ENCODE measurements at regions of chr1 and their contacts with region 1.

Region 1: DNA sequence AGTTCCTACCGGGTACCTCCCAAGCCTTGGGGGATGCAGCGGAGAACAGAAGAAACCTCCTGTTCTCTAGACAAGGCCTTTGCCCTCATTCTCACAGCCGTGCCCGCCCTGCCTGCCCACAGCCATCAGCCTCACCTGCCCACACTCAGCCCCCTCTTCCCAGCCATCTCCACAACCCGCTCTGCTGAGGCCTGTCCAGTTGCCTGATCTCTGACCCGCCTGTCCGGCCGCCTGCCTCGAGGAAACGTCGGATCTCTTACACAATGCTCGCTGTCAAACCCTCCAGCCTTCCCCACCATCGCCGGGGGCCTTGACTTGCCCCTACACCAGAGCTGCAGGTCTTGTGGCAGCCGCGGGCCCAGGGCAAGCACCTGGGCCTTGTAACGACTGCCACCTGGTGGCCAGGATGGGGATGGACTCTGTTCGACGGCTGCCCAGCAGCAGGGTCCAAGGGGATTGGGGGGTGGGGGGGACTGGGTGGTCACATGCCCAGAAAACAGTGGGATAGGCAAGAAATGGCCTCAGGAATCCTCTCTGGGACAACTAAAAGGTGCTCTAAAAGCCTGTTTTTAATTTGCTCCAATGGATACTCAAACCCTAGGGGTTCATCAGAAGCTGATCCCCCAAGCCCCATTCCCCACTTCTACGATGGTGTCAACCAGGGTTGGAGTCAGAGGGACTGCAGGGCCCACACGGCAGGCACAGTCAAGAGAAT is 31.0 kb downstream of the SLC45A1 start:
- DNase-seq: peak; percentile 67 to 75 (median 75)
- ATAC-seq: peak; percentile 73
- H3K4me3 ChIP-seq: no peak overlapping the region
- H3K27ac ChIP-seq: no peak overlapping the region
- H3K4me1 ChIP-seq: peaks cover 6% of the 10 kb centered on the region
- H3K27me3 ChIP-seq: no peaks in the 10 kb centered on the region
- CTCF ChIP-seq: peak; percentile 72 to 90 (median 76)
- POLR2A ChIP-seq: no peak

Region 2: DNA sequence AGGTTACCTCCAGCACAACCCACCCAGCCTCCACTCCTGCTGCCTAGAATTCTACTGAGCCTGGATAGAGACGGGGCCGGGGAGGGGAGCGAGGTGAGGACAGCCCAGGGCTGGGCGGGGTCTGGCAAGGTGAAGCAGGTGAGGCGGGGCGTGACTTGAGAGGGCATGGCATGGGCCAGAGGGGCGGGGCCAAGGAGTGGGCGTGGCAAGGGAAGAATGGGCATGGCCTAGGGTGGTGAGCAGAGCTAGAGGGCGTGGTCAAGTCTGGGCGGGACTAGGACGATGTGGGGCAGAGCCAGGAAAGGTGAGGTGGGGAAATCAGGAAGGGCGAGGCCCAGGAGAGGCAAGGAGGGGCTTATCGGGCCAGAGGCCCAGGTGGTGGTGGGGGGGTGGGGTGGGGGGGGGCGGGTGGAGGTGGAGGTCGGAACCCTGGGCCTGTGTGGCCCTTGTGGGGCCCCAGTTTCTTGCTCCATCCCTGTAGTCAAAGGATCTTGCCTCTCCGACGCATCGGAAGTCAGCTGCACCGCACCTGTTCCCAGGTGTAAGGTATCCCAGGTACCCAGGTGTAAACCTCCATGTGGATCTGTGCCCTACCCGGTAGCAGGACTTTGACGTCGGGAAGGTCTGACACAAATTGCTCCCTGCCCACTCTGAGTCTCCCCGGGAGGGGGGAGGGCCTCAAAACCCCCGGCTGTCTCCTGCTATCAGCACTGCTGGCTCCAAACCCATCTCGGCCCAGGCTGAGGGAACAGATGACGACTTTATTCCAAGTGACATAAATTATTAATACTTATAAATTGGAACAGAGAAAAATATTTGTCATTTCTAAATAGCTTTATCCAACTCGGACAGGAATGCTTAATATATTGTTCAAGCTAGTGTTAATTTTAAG is 463.2 kb before region 1 on chr1:
- intact Hi-C with region 1: no loop called
- DNase-seq: peak; percentile 87 to 95 (median 90)
- ATAC-seq: peak; percentile 95
- H3K4me3 ChIP-seq: no peak overlapping the region
- H3K27ac ChIP-seq: peak overlapping the region in 2 of 4 donors; percentile 12 to 22
- H3K4me1 ChIP-seq: peaks cover 9% of the 10 kb centered on the region
- H3K27me3 ChIP-seq: no peaks in the 10 kb centered on the region
- CTCF ChIP-seq: no peak
- POLR2A ChIP-seq: no peak

Region 3: GRCh38 chr1:7975212-7975865 is 373.6 kb before region 1 on chr1:
- intact Hi-C with region 1: loop called (anchors 5 kb)
- DNase-seq: peak; percentile 77 to 82 (median 78)
- ATAC-seq: peak; percentile 96
- H3K4me3 ChIP-seq: no peak overlapping the region
- H3K27ac ChIP-seq: peak overlapping the region in 1 of 4 donors; percentile 10
- H3K4me1 ChIP-seq: no peaks in the 10 kb centered on the region
- H3K27me3 ChIP-seq: no peaks in the 10 kb centered on the region
- CTCF ChIP-seq: peak; percentile 68 to 95 (median 94)
- POLR2A ChIP-seq: no peak

Region 4: DNA sequence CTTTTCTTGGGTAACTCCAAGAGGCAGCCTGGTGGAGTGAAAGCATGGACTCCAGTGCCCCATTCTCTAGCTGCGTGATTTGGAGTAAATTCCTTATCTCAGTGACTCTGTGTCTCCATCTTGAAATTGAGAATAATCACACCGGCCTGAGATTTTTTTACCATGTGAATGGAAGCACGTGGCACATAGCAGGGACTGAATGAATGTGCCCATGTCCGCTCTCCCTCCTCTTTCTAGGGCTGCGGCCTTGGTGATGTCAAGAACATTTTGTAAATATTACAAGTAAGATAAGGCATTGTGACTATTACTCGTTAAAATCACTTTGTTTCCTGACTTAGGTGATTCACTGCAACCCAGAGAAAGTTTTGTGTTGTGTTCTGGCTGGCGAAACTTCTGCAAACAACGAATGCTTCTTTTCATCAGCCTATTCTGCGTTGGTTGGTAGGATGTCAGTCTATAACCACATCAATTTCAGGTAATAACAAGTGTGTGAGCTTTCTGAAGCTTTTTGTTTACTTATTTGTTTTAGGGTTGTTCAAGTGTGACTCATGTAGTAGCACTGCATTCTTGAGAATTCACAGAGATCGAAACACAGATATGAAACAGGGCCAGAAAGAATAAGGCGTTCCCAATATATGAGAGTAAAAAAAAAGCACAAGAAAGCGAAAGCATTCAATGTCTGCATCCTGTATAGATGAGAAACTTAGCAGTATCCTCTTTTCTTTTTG is 166.7 kb before region 1 on chr1:
- intact Hi-C with region 1: no loop called
- DNase-seq: peak; percentile 84 to 96 (median 90)
- ATAC-seq: peak; percentile 98
- H3K4me3 ChIP-seq: no peak overlapping the region
- H3K27ac ChIP-seq: peak overlapping the region; percentile 82 to 94 (median 90)
- H3K4me1 ChIP-seq: peaks cover 46% of the 10 kb centered on the region
- H3K27me3 ChIP-seq: no peaks in the 10 kb centered on the region
- CTCF ChIP-seq: no peak
- POLR2A ChIP-seq: peak in 2 of 3 donors; percentile 62 to 63